ENCODE measurements at regions of chr6 and their contacts with region 1.

Region 1: DNA sequence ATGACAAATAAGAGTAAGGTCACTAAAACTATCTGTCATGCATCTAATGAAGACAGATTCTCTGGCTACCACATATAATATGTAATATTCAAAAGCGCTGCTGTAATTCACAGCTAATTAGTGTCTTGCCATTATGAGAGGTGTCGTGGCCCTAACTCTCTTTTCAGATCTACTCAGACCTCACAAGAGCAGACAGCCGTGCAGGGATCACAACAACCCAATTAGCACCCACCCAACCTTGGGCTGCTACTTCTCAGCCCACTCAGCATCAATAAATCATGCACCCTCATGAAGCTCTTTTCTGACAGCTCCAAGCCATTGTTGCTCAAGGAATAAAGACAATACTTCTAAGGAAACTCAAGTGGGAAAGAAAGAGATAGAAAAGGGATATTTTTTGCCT is 61.5 kb downstream of the FRK start:
- DNase-seq: no peak
- ATAC-seq: no peak
- H3K4me3 ChIP-seq: no peak overlapping the region
- H3K4me3 Mint-ChIP-seq: no peak overlapping the region
- H3K27ac ChIP-seq: no peak overlapping the region
- H3K27ac Mint-ChIP-seq: no peak overlapping the region
- H3K4me1 ChIP-seq: no peaks in the 10 kb centered on the region
- H3K4me1 Mint-ChIP-seq: no peaks in the 10 kb centered on the region
- H3K27me3 ChIP-seq: peaks cover 0 to 3% of the 10 kb centered on the region in 2 experiments
- H3K27me3 Mint-ChIP-seq: peaks cover 14% of the 10 kb centered on the region
- CTCF ChIP-seq: no peak

Region 2: GRCh38 chr6:115310156-115310555 is 689.1 kb before region 1 on chr6:
- CTCF ChIA-PET with region 1: no interaction called
- POLR2A ChIA-PET with region 1: no interaction called
- intact Hi-C with region 1: loop called in 1 of 2 experiments (anchors 5 kb)
- DNase-seq: no peak
- ATAC-seq: no peak
- H3K4me3 ChIP-seq: no peak overlapping the region
- H3K4me3 Mint-ChIP-seq: no peak overlapping the region
- H3K27ac ChIP-seq: no peak overlapping the region
- H3K27ac Mint-ChIP-seq: no peak overlapping the region
- H3K4me1 ChIP-seq: no peaks in the 10 kb centered on the region
- H3K4me1 Mint-ChIP-seq: no peaks in the 10 kb centered on the region
- H3K27me3 ChIP-seq: no peaks in the 10 kb centered on the region
- H3K27me3 Mint-ChIP-seq: no peaks in the 10 kb centered on the region
- CTCF ChIP-seq: no peak